ENCODE measurements at regions of chr11 and their contacts with region 1.

Region 1: GRCh38 chr11:77424644-77425043 is 49.2 kb downstream of the PAK1 start:
- DNase-seq: no peak
- ATAC-seq: no peak
- H3K4me3 ChIP-seq: no peak overlapping the region
- H3K27ac ChIP-seq: no peak overlapping the region
- H3K4me1 ChIP-seq: no peaks in the 10 kb centered on the region
- H3K27me3 ChIP-seq: peaks cover 13% of the 10 kb centered on the region
- CTCF ChIP-seq: no peak
- POLR2A ChIP-seq: no peak
- RAD21 ChIP-seq: no peak

Region 2: GRCh38 chr11:77457340-77457739 is 32.7 kb after region 1 on chr11:
- CTCF ChIA-PET with region 1: no interaction called
- POLR2A ChIA-PET with region 1: no interaction called
- dilution Hi-C with region 1: no loop called
- in situ Hi-C with region 1: no loop called
- intact Hi-C with region 1: loop called (anchors 5 kb)
- DNase-seq: no peak
- ATAC-seq: no peak
- H3K4me3 ChIP-seq: no peak overlapping the region
- H3K27ac ChIP-seq: no peak overlapping the region
- H3K4me1 ChIP-seq: no peaks in the 10 kb centered on the region
- H3K27me3 ChIP-seq: peaks cover 14% of the 10 kb centered on the region
- CTCF ChIP-seq: no peak
- POLR2A ChIP-seq: no peak
- RAD21 ChIP-seq: no peak

Region 3: DNA sequence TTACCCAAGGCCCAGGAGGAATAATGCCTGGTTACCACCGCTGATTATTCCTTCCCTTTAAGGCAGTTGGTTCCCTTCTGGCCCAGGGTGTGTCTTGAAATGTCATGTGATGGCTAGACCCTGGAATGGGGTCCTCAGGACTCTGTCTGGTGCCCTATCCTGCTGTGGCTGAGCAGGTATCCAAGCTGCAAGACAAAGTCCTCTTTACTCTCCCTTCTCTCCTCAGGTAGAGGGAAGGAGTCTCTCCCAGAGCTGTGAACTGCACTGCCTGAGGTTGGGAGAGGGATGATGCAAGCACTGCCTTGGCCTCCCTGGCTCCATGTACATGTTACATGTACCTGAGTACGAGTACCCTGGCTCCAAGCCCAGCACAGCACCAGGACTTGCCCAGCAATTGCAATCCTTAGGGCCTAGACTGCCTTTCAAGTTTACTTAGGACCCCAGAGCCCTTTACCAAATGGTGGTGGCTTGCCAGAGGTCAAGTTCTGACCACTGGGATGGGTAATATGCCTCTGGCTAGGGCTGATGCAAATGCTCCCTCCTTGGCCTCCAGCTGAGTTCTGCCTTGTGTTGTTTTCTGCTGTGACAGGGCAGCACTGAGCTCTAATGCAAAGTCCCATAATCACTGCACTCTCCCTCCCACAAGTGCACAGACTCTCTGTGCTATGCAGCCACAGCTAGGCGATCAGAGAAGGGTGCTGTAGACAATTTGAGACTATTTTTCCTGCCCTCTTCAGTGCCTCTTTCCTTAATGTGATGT is 144.5 kb after region 1 on chr11:
- CTCF ChIA-PET with region 1: no interaction called
- POLR2A ChIA-PET with region 1: no interaction called
- dilution Hi-C with region 1: no loop called
- in situ Hi-C with region 1: no loop called
- intact Hi-C with region 1: no loop called
- DNase-seq: no peak
- ATAC-seq: no peak
- H3K4me3 ChIP-seq: no peak overlapping the region
- H3K27ac ChIP-seq: no peak overlapping the region
- H3K4me1 ChIP-seq: peaks cover 3% of the 10 kb centered on the region
- H3K27me3 ChIP-seq: no peaks in the 10 kb centered on the region
- CTCF ChIP-seq: no peak
- POLR2A ChIP-seq: no peak
- RAD21 ChIP-seq: no peak